Caco-2 (cell line): ENCODE measurements at regions of chr17 and their contacts with region 1.

Region 1: GRCh38 chr17:28644985-28645939 is at the start of gene BLTP2:
- DNase-seq: peak; percentile 96
- H3K4me3 ChIP-seq: peak within 1 kb of the TSS; percentile 69
- H3K4me3 Mint-ChIP-seq: peak within 1 kb of the TSS; percentile 94
- H3K27ac Mint-ChIP-seq: peak within 1 kb of the TSS; percentile 85
- H3K4me1 ChIP-seq: peaks cover 23% of the 10 kb centered on the region
- H3K4me1 Mint-ChIP-seq: peaks cover 26% of the 10 kb centered on the region
- H3K27me3 ChIP-seq: no peaks in the 10 kb centered on the region
- H3K27me3 Mint-ChIP-seq: no peaks in the 10 kb centered on the region
- CTCF ChIP-seq: no peak
- total RNA-seq, gene BLTP2: 154 and 176 TPM in 2 replicates

Region 2: GRCh38 chr17:28384281-28385036 is 260.8 kb before region 1 on chr17:
- CTCF ChIA-PET with region 1: no interaction called
- POLR2A ChIA-PET with region 1: no interaction called
- intact Hi-C with region 1: no loop called
- DNase-seq: peak; percentile 83 to 86
- H3K4me3 ChIP-seq: peak overlapping the region; percentile 52
- H3K4me3 Mint-ChIP-seq: peak overlapping the region; percentile 89
- H3K27ac Mint-ChIP-seq: peak overlapping the region; percentile 18
- H3K4me1 ChIP-seq: peaks cover 31% of the 10 kb centered on the region
- H3K4me1 Mint-ChIP-seq: peaks cover 17% of the 10 kb centered on the region
- H3K27me3 ChIP-seq: no peaks in the 10 kb centered on the region
- H3K27me3 Mint-ChIP-seq: no peaks in the 10 kb centered on the region
- CTCF ChIP-seq: no peak

Region 3: DNA sequence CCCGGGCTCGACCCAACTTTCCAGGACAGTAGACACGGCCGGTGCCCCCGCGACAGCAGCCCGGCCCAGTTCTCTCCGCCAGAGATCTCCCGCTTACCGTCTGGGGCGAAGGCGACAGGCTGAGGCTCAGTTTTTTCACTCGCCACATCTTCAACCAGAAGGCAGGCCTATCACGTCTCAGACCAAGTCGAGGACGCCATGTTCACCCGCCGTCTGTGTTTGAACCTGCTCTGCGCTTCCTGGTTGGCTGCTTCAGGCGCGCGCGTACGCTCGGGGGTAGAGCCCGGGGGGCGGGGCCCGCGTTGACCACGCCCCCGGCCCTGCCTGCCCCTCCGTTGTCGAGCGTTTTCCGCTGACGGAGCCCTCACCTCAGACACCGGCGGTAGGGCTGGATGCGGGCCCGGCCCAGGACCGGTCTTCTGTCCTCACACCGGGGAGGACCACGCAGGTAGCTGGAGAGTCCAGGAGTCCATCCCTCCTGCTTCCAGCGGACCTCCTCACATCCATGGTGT is 46.4 kb before region 1 on chr17 and contains the start of gene SPAG5:
- CTCF ChIA-PET with region 1: no interaction called
- POLR2A ChIA-PET with region 1: interaction called, 8 read pairs
- intact Hi-C with region 1: loop called (anchors 10 kb)
- DNase-seq: peak; percentile 94 to 98
- H3K4me3 ChIP-seq: peak within 1 kb of the TSS; percentile 86
- H3K4me3 Mint-ChIP-seq: peak within 1 kb of the TSS; percentile 96
- H3K27ac Mint-ChIP-seq: peak within 1 kb of the TSS; percentile 99
- H3K4me1 ChIP-seq: peaks cover 6% of the 10 kb centered on the region
- H3K4me1 Mint-ChIP-seq: peaks cover 20% of the 10 kb centered on the region
- H3K27me3 ChIP-seq: no peaks in the 10 kb centered on the region
- H3K27me3 Mint-ChIP-seq: no peaks in the 10 kb centered on the region
- CTCF ChIP-seq: no peak
- total RNA-seq, gene SPAG5: 113 TPM in 2 replicates

Region 4: DNA sequence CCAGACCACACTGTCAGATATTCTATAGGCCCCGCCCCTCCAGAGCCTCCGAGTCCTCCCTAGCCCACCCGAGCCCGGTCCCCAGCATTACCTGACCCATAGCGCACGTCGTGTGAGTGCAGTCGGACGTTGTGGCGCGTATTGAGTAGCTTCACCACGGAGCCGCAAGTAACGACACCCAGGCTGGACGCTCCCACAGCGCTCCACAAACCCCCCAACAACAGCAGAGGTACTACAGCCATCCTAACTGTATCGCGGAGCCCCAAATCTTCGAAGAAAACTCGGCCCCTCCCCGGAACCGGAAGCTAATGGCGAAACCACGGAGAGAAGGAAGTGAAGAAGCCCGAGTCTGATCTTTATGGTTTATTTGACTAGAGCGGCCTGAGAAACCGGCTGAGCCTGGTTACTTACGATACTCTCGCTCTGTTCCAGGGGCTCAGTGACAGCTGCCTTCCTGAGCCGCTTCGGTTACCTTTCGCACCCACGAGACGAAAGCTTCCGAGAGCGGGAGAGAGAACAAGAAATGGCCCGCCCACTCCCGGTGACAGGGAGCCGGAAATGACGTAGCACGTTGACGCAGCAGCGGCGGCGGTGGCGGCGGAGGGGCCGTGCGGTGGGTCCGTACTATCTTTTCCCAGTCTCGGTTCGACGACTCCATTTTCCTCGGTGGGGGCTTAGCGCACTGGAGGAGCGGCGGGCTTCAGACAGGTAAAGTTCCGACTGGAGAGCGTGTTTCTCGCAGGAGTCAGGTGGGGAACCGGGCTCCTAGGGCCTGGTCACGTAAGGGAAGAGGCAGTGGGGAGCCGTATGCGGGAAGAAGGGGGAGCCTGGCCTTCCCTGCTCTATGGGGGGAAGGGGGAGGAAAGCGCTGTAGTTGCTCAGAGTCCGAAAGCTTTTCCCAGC is 16.6 kb after region 1 on chr17 and contains the starts of genes SDF2 and SUPT6H:
- CTCF ChIA-PET with region 1: interaction called, 26 read pairs
- POLR2A ChIA-PET with region 1: interaction called, 23 read pairs
- intact Hi-C with region 1: loop called (anchors 1 kb)
- DNase-seq: peak; percentile 91 to 94
- H3K4me3 ChIP-seq: peak within 1 kb of the TSS; percentile 80
- H3K4me3 Mint-ChIP-seq: peak within 1 kb of the TSS; percentile 89
- H3K27ac Mint-ChIP-seq: peak within 1 kb of the TSS; percentile 95
- H3K4me1 ChIP-seq: peaks cover 14% of the 10 kb centered on the region; the same call in 1 of the 2 replicates
- H3K4me1 Mint-ChIP-seq: peaks cover 31% of the 10 kb centered on the region
- H3K27me3 ChIP-seq: no peaks in the 10 kb centered on the region
- H3K27me3 Mint-ChIP-seq: no peaks in the 10 kb centered on the region
- CTCF ChIP-seq: no peak
- total RNA-seq, gene SDF2: 63.5 and 64.9 TPM in 2 replicates
- total RNA-seq, gene SUPT6H: 127 and 129 TPM in 2 replicates

Region 5: DNA sequence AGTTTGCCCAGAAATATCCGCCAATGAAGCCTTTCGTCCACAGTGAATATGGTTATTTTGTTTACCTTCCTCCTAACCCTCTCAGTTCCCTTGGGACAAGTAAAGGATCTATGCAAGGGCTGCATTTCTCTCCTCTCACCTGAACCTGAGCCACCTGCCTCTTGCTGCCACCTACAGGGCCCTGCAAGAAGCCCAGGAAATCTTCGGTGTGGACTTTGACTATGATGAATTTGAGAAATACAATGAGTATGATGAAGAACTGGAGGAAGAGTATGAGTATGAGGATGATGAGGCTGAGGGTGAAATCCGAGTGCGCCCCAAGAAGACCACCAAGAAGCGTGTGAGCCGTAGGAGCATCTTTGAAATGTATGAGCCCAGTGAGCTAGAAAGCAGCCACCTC is 30.7 kb after region 1 on chr17:
- CTCF ChIA-PET with region 1: interaction called, 11 read pairs
- POLR2A ChIA-PET with region 1: interaction called, 3 read pairs
- intact Hi-C with region 1: loop called (anchors 1 kb)
- DNase-seq: peak; percentile 50 to 59
- H3K4me3 ChIP-seq: no peak overlapping the region
- H3K4me3 Mint-ChIP-seq: no peak overlapping the region
- H3K27ac Mint-ChIP-seq: no peak overlapping the region
- H3K4me1 ChIP-seq: no peaks in the 10 kb centered on the region
- H3K4me1 Mint-ChIP-seq: no peaks in the 10 kb centered on the region
- H3K27me3 ChIP-seq: no peaks in the 10 kb centered on the region
- H3K27me3 Mint-ChIP-seq: no peaks in the 10 kb centered on the region
- CTCF ChIP-seq: peak in 1 of 2 experiments; percentile 88

Region 6: DNA sequence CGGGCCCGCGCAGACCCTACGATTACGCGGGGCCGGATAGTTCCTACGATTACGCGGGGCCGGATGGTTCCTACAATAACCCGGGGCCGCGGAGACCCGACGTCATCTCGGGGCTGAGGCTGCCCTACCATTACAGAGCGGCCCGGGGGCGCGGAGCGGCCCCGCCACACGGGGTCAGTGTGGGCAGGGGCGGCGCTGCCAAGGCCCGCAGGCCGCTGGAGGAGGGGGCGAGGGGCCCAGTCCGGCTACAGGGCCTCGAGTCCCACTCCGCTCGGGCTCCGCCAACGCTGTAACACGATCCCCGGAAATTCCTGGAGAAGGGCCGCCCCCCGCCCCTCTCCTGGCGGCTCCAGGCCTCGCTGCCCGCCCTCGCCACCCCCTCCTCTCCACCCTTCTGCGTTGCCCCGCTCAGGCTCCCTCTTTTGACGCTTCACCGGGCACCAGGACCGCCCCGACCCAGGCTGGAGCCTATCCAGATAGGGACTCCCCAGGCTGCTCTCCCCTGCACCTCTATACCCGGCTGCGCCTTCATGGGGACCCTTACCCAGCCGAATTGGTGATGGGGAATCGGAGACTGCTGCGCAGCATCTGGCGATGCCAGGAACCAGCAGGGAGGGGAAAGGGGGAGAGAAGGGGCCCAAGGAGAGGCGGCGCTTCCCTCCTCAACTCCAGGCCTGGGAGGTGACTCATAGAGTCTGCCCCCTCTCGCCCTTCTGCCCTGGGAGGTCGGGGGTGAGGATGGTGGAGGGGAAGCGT is 72.5 kb after region 1 on chr17 and contains the start of gene RAB34:
- CTCF ChIA-PET with region 1: interaction called, 6 read pairs
- POLR2A ChIA-PET with region 1: interaction called, 13 read pairs
- intact Hi-C with region 1: loop called (anchors 2 kb)
- DNase-seq: peak in 1 of 2 experiments; percentile 58
- H3K4me3 ChIP-seq: no peak within 1 kb of the TSS
- H3K4me3 Mint-ChIP-seq: peak within 1 kb of the TSS; percentile 94
- H3K27ac Mint-ChIP-seq: peak within 1 kb of the TSS; percentile 98
- H3K4me1 ChIP-seq: peaks cover 19% of the 10 kb centered on the region
- H3K4me1 Mint-ChIP-seq: peaks cover 18% of the 10 kb centered on the region
- H3K27me3 ChIP-seq: no peaks in the 10 kb centered on the region
- H3K27me3 Mint-ChIP-seq: no peaks in the 10 kb centered on the region
- CTCF ChIP-seq: no peak
- total RNA-seq, gene RAB34: 1.2 and 1.8 TPM in 2 replicates